Left ventricle myocardium inferior (tissue), 1 donor: ENCODE measurements at regions of chr13 and their contacts with region 1.

Region 1: GRCh38 chr13:99176309-99177276 is 24.1 kb upstream of the UBAC2 start:
- DNase-seq: peak; percentile 65
- H3K4me3 ChIP-seq: no peak overlapping the region
- H3K27ac ChIP-seq: no peak overlapping the region
- H3K4me1 ChIP-seq: no peaks in the 10 kb centered on the region
- H3K27me3 ChIP-seq: peaks cover 52% of the 10 kb centered on the region
- CTCF ChIP-seq: peak; percentile 97

Region 2: DNA sequence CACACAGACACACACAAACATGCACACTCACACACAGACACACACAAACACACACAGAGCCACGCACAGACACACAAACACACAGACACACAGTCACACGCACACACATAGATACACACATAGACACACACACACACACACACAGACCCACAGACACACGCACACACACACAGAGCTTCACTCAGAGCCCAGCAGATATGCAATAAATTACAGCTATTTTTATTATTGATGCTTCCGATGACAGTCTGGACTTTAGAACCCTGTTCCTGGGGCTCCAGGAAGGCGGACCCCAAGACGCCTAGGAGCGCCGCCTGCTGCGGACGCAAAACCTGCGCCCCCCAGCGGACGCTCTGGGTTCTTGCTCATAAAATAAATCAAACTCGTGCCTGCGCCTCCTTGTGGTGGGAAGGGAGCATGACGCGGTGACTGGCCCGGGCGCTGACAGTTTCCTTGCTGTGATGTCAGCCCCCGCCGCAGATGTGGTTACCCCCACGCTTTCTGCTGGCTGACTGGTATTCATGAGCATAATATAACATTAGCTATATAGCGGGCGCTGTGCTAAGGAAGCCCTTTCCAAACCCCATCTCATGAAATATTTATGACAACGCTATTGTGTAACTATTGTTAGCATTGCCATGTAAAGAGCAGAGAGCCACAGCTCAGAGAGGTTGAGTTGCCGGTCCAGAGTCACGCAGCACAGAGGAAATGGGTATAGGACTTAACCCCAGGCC is 260.3 kb after region 1 on chr13:
- intact Hi-C with region 1: loop called (anchors 5 kb)
- DNase-seq: peak; percentile 85
- H3K4me3 ChIP-seq: no peak overlapping the region
- H3K27ac ChIP-seq: no peak overlapping the region
- H3K4me1 ChIP-seq: peaks cover 17% of the 10 kb centered on the region
- H3K27me3 ChIP-seq: peaks cover 27% of the 10 kb centered on the region
- CTCF ChIP-seq: peak; percentile 100